Heart left ventricle (tissue), 16 donors: ENCODE measurements at regions of chr3 and their contacts with region 1.

Region 1: DNA sequence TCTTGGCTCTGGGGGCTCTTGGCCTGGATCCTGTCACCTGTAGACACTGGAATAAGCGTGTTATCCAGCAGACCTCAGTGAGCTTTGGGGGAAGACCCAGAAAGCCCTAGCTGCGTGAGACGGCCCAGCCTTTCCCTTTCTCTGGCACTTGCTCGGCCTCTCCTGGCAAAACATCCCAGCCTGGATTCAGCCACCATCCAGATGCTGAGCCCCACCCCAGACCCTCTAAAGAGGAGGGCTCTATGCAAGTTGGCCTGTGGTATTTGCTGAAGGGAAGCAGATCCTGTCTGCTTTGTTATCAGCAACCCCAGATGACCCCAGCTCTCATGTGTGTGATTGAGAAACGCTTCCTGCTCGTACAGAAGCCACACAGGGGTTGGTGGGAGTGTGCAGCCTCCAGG is 267.2 kb downstream of the FAM43A start:
- DNase-seq: peak in 2 of 5 donors; percentile 26 to 52
- ATAC-seq: peak in 3 of 4 donors; percentile 60 to 71 (median 61)
- H3K4me3 ChIP-seq: no peak overlapping the region
- H3K27ac ChIP-seq: peak overlapping the region in 9 of 12 donors; percentile 6 to 72 (median 60)
- H3K4me1 ChIP-seq: peaks cover 0 to 33% (median 17%) of the 10 kb centered on the region in 12 donors
- H3K27me3 ChIP-seq: no peaks in the 10 kb centered on the region
- CTCF ChIP-seq: no peak
- POLR2A ChIP-seq: no peak

Region 2: GRCh38 chr3:194422188-194422587 is 530.7 kb before region 1 on chr3:
- intact Hi-C with region 1: no loop called
- DNase-seq: no peak
- ATAC-seq: no peak
- H3K4me3 ChIP-seq: no peak overlapping the region
- H3K27ac ChIP-seq: no peak overlapping the region
- H3K4me1 ChIP-seq: peaks cover 0 to 18% (median 0%) of the 10 kb centered on the region in 12 donors
- H3K27me3 ChIP-seq: no peaks in the 10 kb centered on the region
- CTCF ChIP-seq: no peak
- POLR2A ChIP-seq: no peak

Region 3: DNA sequence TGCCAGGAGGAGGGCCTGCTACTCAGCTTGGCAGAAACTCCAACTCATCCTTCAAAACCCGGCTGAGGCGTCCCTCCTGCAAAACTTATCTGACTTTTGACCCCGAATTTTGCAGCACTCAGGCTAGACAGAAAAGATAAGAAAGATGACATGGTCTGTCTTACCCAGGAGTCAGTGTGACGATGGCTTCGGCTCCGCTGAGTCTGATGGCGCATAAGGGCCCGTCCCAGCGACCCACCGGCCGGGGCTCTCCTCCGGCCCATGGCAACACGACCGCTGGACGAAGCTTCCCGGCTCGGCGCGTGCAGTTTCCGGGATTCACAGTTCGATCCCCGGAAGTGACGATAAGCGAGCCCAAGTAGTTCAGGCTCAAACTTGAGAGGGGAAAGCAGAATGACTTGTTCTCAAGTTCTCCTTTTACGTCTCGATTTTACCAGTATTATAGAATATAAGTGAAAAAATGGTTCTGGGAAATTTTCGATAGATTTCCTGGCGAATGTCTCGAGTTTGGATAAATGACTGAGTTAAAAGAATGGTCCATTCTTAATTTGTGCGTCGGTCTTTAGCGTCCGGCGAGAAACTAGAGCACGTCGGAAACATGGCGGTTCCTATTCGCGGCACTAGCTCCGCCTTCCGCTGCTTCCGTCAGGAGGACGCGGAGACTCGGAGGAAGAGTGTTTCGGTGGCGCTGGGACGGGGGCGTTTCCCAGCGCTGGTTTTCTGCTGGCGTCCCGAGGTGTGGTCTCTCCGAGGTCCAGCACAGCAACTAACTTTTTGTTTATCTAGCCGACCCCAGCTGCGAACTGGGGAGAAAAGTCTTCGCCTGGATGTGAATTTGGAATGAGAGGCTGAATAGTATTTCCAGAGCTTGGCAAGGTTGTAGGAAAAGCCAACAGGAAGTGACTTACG is 280.7 kb before region 1 on chr3 and contains the start of gene LSG1:
- intact Hi-C with region 1: loop called in 1 of 10 experiments (anchors 2 kb)
- DNase-seq: peak; percentile 92 to 95 (median 94)
- ATAC-seq: peak; percentile 92 to 97 (median 95)
- H3K4me3 ChIP-seq: peak within 1 kb of the TSS; percentile 67 to 93 (median 82)
- H3K27ac ChIP-seq: peak within 1 kb of the TSS; percentile 90 to 98 (median 94)
- H3K4me1 ChIP-seq: peaks cover 0 to 36% (median 17%) of the 10 kb centered on the region in 12 donors
- H3K27me3 ChIP-seq: no peaks in the 10 kb centered on the region
- CTCF ChIP-seq: peak in 1 of 12 donors; percentile 5
- POLR2A ChIP-seq: peak in 1 of 2 donors; percentile 39
- total RNA-seq, gene LSG1: 13.7 to 22.2 (median 18.9) TPM

Region 4: DNA sequence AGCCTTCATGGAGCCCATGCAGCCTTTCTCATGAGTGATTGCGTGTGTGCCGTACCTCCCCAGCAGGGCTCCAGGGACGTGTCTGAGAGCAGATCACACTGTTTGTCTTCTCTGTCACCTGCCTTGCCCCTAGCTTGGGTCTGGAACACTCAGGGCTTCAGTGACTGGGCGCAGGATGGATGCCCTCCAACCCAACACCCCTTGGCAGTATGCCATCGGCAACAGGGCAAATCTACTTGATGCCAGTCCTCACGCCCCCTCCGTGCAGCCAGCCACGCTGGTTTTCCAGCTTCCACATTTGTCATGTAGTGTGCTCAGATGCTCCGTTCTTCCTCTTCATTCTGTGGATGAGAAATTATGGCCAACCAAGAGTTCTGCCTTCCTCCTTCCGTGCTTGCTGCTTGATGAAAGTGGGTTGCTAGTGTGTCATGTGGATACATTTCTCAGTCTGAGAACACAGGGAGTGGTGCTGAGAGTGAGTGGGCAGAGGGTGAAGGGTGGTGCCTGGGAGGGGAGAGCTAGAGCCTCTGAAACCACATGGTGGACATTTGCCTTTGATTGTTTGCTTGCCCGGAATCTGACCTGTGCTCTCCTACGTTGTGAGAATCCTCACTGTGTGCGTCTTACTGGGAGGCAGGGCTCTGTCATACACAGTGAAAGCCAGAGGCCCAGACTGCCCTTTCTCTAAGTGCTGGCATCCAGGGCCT is 170.0 kb before region 1 on chr3:
- intact Hi-C with region 1: loop called in 1 of 10 experiments (anchors 5 kb)
- DNase-seq: no peak
- ATAC-seq: peak; percentile 34 to 61 (median 55)
- H3K4me3 ChIP-seq: no peak overlapping the region
- H3K27ac ChIP-seq: peak overlapping the region in 7 of 12 donors; percentile 2 to 72 (median 31)
- H3K4me1 ChIP-seq: peaks cover 0 to 37% (median 22%) of the 10 kb centered on the region in 12 donors
- H3K27me3 ChIP-seq: no peaks in the 10 kb centered on the region
- CTCF ChIP-seq: no peak
- POLR2A ChIP-seq: no peak

Region 5: GRCh38 chr3:194879991-194880939 is 72.6 kb before region 1 on chr3:
- intact Hi-C with region 1: loop called in 2 of 10 experiments (anchors 5 kb)
- DNase-seq: peak; percentile 77 to 86 (median 82)
- ATAC-seq: peak; percentile 44 to 83 (median 72)
- H3K4me3 ChIP-seq: no peak overlapping the region
- H3K27ac ChIP-seq: peak overlapping the region; percentile 54 to 90 (median 81)
- H3K4me1 ChIP-seq: peaks cover 5 to 82% (median 50%) of the 10 kb centered on the region in 12 donors
- H3K27me3 ChIP-seq: no peaks in the 10 kb centered on the region
- CTCF ChIP-seq: no peak
- POLR2A ChIP-seq: no peak